Activated naive CD8-positive, alpha-beta T cell treated with anti-CD3 and anti-CD28 coated beads, Interleukin-2, amount 10 ng/mL, durations not matched to agents 7 days and 5 days (primary cell): ENCODE measurements at regions of chr15 and their contacts with region 1.

Region 1: DNA sequence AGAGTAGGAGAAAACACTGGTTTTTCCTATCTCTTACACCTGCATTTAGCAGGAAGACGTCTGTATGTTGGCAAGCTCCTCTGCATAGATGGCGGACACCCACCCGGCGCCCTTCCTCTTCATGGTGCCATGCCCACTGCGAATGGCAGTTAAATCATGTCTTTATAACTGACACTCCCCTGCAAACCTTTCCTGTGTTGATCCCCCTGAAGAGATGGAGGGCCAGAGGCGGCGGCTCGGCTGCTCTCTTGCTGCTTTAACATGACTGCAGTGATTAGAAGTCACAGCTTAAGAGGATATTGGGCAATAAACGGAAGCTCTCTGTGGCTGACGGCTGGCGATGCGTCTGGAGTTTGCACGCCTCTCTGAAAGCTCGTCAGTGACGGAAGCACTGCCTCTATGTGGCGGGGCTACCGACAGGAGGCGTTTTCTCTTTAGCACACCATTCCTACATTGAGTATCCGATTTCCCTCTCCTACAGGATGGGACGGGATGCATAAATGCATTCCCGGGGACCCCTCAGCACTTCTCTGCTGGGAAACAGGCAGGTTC is 25.5 kb upstream of the SNRPA1 start:
- DNase-seq: peak; percentile 71
- ATAC-seq: peak; percentile 99
- H3K4me3 Mint-ChIP-seq: peak overlapping the region; percentile 92
- H3K27ac Mint-ChIP-seq: peak overlapping the region; percentile 98
- H3K4me1 Mint-ChIP-seq: peaks cover 19% of the 10 kb centered on the region
- H3K27me3 Mint-ChIP-seq: no peaks in the 10 kb centered on the region

Region 2: DNA sequence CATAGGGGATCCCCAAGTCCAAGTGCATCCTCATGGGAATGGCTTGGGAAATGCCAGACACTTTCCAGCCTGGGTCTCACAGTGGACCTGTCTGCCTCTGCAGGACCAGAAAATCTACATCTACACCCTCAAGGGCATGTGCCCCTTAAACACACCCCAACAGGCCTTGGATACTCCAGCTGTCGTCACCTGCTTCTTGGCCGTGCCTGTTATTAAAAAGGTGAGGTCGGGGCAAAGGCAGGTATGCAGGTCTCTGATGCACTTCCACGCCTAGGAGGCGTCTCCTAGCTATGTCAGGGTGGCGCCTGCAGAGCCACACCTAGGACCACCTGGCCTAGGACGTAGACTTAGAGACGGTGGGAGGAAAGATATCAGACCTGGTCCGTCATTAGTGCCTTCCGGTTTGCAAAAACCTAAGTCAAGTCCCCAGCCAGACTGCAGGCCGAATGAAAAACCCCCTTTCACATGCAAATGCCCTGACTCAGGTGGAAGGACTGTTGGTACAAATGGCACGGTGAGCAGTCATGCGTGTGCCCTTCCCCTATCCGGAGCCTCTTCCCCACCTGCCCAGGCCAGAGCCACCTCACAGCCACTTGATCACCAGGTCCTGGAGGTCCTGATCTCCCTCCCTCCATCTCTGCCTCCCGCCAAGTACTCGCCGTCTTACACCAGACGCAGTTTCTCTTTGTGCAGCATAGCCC is 258.0 kb before region 1 on chr15:
- POLR2A ChIA-PET with region 1: no interaction called
- DNase-seq: no peak
- ATAC-seq: no peak
- H3K4me3 Mint-ChIP-seq: no peak overlapping the region
- H3K27ac Mint-ChIP-seq: no peak overlapping the region
- H3K4me1 Mint-ChIP-seq: no peaks in the 10 kb centered on the region
- H3K27me3 Mint-ChIP-seq: no peaks in the 10 kb centered on the region

Region 3: GRCh38 chr15:101333401-101333800 is 12.8 kb after region 1 on chr15:
- POLR2A ChIA-PET with region 1: interaction called, 13 read pairs
- DNase-seq: no peak
- ATAC-seq: no peak
- H3K4me3 Mint-ChIP-seq: peak overlapping the region; percentile 25
- H3K27ac Mint-ChIP-seq: peak overlapping the region; percentile 76
- H3K4me1 Mint-ChIP-seq: peaks cover 7% of the 10 kb centered on the region
- H3K27me3 Mint-ChIP-seq: no peaks in the 10 kb centered on the region